ENCODE measurements at regions of chr1 and their contacts with region 1.

Region 1: DNA sequence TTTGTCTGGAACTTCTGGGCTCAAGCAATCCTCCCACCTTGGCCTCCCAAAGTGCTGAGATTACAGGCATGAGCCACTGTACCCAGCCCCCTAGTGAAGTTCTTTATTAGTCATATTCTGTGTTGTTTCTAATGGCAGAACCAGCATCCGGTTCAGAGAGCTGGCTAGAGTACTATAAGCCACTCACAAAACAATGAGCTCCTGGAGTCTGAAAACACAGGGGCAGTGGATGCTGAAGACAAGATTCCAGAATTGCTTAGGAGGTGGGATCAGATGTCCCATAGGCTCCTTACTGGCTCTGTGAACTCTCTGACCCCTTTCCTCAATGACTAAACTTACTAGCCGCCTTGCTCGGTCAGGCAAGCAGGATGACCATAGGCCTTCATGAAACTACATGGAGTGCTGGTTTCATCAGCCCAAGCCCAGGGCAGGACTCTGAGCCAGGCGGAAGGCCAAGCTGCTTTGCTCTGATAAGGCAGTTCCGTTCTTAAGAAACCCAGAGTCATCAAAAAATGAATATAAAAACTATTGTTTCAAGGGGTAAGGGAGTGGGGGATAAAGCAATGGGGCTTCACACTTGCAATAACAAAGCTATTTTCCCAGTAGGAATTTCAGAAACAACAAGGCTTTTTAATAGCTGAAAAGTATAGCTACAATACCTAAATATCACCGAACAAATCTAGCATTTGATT is 8.1 kb downstream of the MTHFR start:
- DNase-seq: peak; percentile 63 to 85 (median 80)
- H3K4me3 ChIP-seq: no peak overlapping the region
- H3K27ac ChIP-seq: peak overlapping the region in 1 of 2 experiments; percentile 84
- H3K4me1 ChIP-seq: peaks cover 6 to 27% (median 14%) of the 10 kb centered on the region in 4 experiments
- H3K27me3 ChIP-seq: no peaks in the 10 kb centered on the region

Region 2: DNA sequence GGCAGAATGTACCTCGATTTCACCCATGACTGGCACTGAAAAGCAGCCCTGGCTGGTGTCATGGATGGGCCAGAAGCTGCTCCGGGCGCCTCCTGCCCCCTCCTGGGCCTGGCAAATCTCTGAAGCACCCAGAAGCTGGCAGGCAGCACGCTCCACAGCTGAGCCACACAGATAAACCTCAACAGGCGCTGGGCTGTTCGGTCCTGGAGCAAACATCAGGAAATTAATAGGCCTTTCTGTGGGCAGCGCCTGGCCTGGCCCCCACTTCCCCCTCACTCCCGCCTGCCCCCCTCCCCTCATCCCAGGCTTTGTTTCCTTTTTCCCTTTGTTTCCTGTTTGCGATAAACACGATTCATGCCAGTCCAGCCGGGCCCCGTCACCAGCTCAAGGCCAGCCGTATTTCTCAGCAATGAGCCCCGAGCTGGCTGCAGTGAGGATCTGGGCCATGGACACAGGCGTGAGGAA is 338.8 kb before region 1 on chr1:
- CTCF ChIA-PET with region 1: no interaction called
- POLR2A ChIA-PET with region 1: no interaction called
- DNase-seq: peak in 2 of 3 donors; percentile 4 to 24
- H3K4me3 ChIP-seq: no peak overlapping the region
- H3K27ac ChIP-seq: no peak overlapping the region
- H3K4me1 ChIP-seq: no peaks in the 10 kb centered on the region
- H3K27me3 ChIP-seq: peaks cover 4 to 64% (median 16%) of the 10 kb centered on the region in 5 experiments

Region 3: GRCh38 chr1:11784993-11785769 is 12.5 kb before region 1 on chr1:
- CTCF ChIA-PET with region 1: interaction called, 24 read pairs
- POLR2A ChIA-PET with region 1: interaction called, 8 read pairs
- DNase-seq: peak in 2 of 3 donors; percentile 18 to 28
- H3K4me3 ChIP-seq: peak overlapping the region in 5 of 7 experiments; percentile 13 to 68 (median 61)
- H3K27ac ChIP-seq: no peak overlapping the region
- H3K4me1 ChIP-seq: peaks cover 0 to 10% (median 8%) of the 10 kb centered on the region in 4 experiments
- H3K27me3 ChIP-seq: no peaks in the 10 kb centered on the region

Region 4: GRCh38 chr1:11918779-11919519 is 121.3 kb after region 1 on chr1:
- CTCF ChIA-PET with region 1: no interaction called
- POLR2A ChIA-PET with region 1: no interaction called
- DNase-seq: no peak
- H3K4me3 ChIP-seq: no peak overlapping the region
- H3K27ac ChIP-seq: no peak overlapping the region
- H3K4me1 ChIP-seq: peaks cover 0 to 7% (median 5%) of the 10 kb centered on the region in 4 experiments
- H3K27me3 ChIP-seq: no peaks in the 10 kb centered on the region